Caco-2 (cell line): ENCODE measurements at regions of chr14 and their contacts with region 1.

Region 1: GRCh38 chr14:102063091-102063802 is 23.6 kb downstream of the HSP90AA1 start:
- DNase-seq: peak; percentile 87 to 89
- H3K4me3 ChIP-seq: 0 out of 2 replicates have a peak overlapping the region, but pooled peaks have one; percentile 13
- H3K4me3 Mint-ChIP-seq: peak overlapping the region; percentile 63
- H3K27ac Mint-ChIP-seq: peak overlapping the region; percentile 85
- H3K4me1 ChIP-seq: peaks cover 10% of the 10 kb centered on the region
- H3K4me1 Mint-ChIP-seq: peaks cover 7% of the 10 kb centered on the region
- H3K27me3 ChIP-seq: no peaks in the 10 kb centered on the region
- H3K27me3 Mint-ChIP-seq: no peaks in the 10 kb centered on the region
- CTCF ChIP-seq: peak; percentile 34 to 45

Region 2: DNA sequence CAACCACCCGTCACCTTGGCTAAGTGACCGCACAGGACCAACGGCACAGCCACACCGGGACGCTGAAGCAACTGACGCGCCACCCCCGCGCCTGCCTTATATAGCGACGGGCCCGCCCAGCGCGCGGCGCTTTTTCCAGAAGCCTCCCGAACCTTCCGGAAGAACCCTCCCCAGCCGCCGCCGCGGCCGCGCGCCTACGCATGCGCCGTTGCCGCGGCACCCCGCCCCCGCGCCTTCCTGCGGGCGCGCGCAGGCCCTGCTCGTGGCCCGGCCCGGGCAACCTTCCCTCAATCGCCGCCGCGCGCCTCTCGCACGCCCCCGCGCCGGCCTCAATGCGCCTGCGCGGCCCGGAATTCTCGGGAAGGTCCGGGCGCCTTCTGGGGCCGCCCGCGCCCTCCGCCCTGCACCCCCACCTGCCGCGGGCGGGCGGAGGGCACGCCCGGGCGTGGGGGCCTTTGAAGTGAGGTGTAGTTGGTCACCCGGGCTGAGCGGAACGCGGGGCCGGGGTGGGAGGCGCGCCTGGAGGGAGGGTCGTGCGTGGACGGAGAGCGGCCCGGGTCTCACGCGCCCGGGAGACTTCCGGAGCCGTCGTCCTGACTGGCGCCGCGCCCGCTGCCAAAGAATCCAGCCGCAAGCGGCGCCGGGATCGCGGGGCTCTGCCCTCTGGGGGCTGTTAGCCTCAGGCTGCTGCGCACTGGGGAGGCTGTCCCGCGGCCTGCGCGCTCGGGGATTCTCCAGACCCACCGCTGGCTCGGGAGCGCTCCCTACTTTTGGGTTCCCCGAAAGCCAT is 23.9 kb after region 1 on chr14 and contains the start of gene HSP90AA1:
- CTCF ChIA-PET with region 1: interaction called, 7 read pairs
- POLR2A ChIA-PET with region 1: no interaction called
- intact Hi-C with region 1: loop called (anchors 1 kb)
- DNase-seq: peak; percentile 90 to 96
- H3K4me3 ChIP-seq: peak within 1 kb of the TSS; percentile 87
- H3K4me3 Mint-ChIP-seq: peak within 1 kb of the TSS; percentile 81
- H3K27ac Mint-ChIP-seq: peak within 1 kb of the TSS; percentile 71
- H3K4me1 ChIP-seq: peaks cover 29% of the 10 kb centered on the region
- H3K4me1 Mint-ChIP-seq: peaks cover 30% of the 10 kb centered on the region
- H3K27me3 ChIP-seq: no peaks in the 10 kb centered on the region
- H3K27me3 Mint-ChIP-seq: no peaks in the 10 kb centered on the region
- CTCF ChIP-seq: peak in 1 of 2 experiments; percentile 33
- total RNA-seq, gene HSP90AA1: 464 and 478 TPM in 2 replicates